Heart right ventricle (tissue), 16 donors: ENCODE measurements at regions of chrX and their contacts with region 1.

Region 1: GRCh38 chrX:106894392-106894909 is 8.7 kb downstream of the RIPPLY1 start:
- DNase-seq: peak; percentile 13 to 21
- ATAC-seq: peak; percentile 42 to 89 (median 80)
- H3K4me3 ChIP-seq: no peak overlapping the region
- H3K27ac ChIP-seq: no peak overlapping the region
- H3K4me1 ChIP-seq: peaks cover 0 to 5% (median 0%) of the 10 kb centered on the region in 9 donors
- H3K27me3 ChIP-seq: peaks cover 0 to 55% (median 0%) of the 10 kb centered on the region in 7 donors
- CTCF ChIP-seq: peak; percentile 48 to 89 (median 72)

Region 2: DNA sequence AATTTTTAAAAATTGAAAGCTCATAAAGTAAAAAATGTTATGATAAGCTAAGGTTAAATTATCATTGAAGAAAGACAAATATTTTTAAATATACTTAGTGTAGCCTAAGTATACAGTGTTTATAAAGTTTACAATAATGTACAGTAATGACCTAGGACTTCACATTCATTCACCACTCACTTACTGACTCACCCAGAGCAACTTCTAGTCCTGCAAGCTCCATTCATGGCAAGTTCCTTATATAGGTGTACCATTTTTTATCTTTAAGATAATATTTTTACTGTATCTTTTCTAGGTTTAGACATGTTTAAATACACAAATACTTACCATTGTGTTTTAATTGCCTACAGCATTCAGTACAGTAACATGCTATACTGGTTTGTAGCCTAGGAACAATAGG is 395.0 kb before region 1 on chrX:
- intact Hi-C with region 1: no loop called
- DNase-seq: no peak
- ATAC-seq: no peak
- H3K4me3 ChIP-seq: no peak overlapping the region
- H3K27ac ChIP-seq: no peak overlapping the region
- H3K4me1 ChIP-seq: no peaks in the 10 kb centered on the region
- H3K27me3 ChIP-seq: peaks cover 0 to 31% (median 0%) of the 10 kb centered on the region in 7 donors
- CTCF ChIP-seq: no peak

Region 3: GRCh38 chrX:106952988-106953387 is 58.5 kb after region 1 on chrX:
- intact Hi-C with region 1: loop called in 6 of 10 experiments (anchors 2 to 5 kb)
- DNase-seq: no peak
- ATAC-seq: no peak
- H3K4me3 ChIP-seq: no peak overlapping the region
- H3K27ac ChIP-seq: no peak overlapping the region
- H3K4me1 ChIP-seq: no peaks in the 10 kb centered on the region
- H3K27me3 ChIP-seq: peaks cover 0 to 36% (median 0%) of the 10 kb centered on the region in 7 donors
- CTCF ChIP-seq: peak in 7 of 9 donors; percentile 28 to 50 (median 45)

Region 4: DNA sequence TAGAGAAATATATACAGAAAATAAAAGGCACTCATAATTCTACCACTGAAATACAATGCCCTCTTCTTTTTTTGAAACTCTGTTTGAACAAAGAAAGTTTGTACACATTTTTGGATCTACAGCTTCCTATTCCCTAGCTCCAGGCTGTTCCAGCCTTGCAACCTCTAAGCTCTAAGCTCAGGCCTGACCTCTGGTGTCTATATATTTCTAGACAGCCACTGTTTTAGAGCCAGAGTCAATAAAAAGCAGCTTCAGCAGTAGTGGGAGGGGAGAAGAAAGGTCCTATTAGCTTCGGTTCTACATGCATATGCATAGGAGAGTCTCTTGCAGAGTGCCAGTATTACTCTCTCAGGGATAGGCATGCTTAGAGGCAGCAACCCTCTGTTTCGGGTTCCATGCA is 65.5 kb after region 1 on chrX:
- intact Hi-C with region 1: loop called in 3 of 10 experiments (anchors 2 to 5 kb)
- DNase-seq: no peak
- ATAC-seq: no peak
- H3K4me3 ChIP-seq: no peak overlapping the region
- H3K27ac ChIP-seq: no peak overlapping the region
- H3K4me1 ChIP-seq: no peaks in the 10 kb centered on the region
- H3K27me3 ChIP-seq: peaks cover 0 to 42% (median 0%) of the 10 kb centered on the region in 7 donors
- CTCF ChIP-seq: peak in 1 of 9 donors; percentile 7

Region 5: DNA sequence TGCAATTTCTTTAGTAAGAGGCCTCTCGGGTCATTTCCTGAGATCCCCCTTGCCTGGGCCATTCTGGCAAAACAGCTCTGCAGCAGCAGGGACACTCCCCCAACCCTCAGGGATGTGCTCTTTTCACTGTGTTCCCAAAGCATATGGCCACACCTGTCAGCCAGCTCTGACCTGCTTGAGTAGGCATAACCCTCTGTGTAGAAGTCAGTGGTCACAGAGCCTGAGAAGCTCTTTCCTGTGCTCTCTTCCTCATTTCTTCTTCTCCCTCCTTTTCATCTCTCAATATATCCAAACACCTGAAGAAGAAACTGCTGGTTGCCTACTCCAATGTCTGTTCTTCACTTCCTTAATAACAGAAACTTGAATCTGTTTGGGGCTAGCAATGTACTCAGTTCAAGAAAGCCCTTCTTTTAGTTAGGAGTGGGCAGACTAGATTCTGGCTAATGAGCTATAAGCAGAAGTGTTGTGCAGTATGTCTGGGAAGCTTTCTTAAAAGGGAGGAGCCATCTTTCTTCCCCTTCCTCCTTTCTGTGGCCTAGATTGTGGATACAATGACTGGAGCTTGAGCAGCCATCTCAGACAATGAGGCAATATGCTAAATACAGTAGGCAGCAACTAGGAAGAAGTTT is 807.2 kb after region 1 on chrX:
- intact Hi-C with region 1: loop called in 1 of 10 experiments (anchors 5 kb)
- DNase-seq: no peak
- ATAC-seq: peak in 2 of 8 donors; percentile 37 to 61
- H3K4me3 ChIP-seq: no peak overlapping the region
- H3K27ac ChIP-seq: peak overlapping the region in 2 of 10 donors; percentile 29 to 45
- H3K4me1 ChIP-seq: peaks cover 0 to 20% (median 0%) of the 10 kb centered on the region in 9 donors
- H3K27me3 ChIP-seq: peaks cover 0 to 27% (median 0%) of the 10 kb centered on the region in 7 donors
- CTCF ChIP-seq: no peak